Activated B cell treated with CpG ODN at 0.5 μM for 24 hours (primary cell): ENCODE measurements at regions of chr11 and their contacts with region 1.

Region 1: DNA sequence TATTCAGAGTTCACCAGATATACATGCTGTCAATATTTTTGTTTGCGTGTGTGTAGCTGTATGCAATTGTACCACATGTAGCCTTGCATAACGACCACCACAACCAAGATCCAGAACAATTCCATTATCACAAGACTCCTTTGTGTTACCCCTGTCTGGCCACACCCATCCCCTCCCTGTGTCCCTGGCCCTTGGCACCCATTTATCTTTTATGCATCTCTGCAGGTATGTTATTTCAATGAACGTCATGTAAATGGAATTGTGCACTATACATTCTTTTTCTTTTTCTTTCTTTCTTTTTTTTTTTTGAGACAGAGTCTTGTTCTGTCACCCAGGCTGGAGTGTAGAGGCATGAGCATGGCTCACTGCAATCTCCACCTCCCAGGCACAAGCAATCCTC is 9.7 kb upstream of the PAFAH1B2 start:
- DNase-seq: no peak
- ATAC-seq: no peak
- H3K4me3 Mint-ChIP-seq: no peak overlapping the region
- H3K27ac Mint-ChIP-seq: no peak overlapping the region
- H3K4me1 Mint-ChIP-seq: no peaks in the 10 kb centered on the region
- H3K27me3 Mint-ChIP-seq: no peaks in the 10 kb centered on the region
- CTCF ChIP-seq: no peak

Region 2: DNA sequence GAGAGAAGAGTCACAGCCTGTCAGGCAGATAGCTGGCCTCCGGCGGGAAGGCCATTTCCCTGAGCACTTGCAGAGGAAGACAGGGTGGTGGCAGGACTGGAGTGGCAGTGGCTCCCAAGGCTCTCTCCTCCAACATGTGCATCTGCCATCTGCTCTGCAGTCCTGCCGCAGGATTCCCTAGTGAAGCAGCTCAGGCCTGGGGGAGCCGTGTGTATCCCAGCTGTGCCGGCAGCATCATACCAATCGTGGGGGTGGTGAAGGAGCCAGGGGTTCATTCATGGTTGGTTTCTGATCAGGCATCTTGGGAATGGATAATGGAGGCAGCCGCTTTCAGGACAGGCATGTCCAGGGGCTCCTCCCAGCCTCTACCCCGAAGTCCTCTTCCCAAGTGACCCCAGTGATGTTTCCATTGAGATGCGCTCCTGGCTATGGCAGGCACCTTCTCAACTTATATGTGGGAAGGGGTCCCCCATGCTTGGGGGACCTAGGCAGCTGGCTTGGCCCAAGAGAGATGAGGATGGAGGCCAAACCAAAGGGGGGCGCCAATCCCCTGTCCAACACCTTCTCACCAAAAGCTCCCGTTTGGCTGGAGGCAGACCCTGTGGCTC is 70.9 kb after region 1 on chr11:
- CTCF ChIA-PET with region 1: no interaction called
- POLR2A ChIA-PET with region 1: no interaction called
- intact Hi-C with region 1: loop called (anchors 5 kb)
- DNase-seq: no peak
- ATAC-seq: no peak
- H3K4me3 Mint-ChIP-seq: no peak overlapping the region
- H3K27ac Mint-ChIP-seq: peak overlapping the region; percentile 2
- H3K4me1 Mint-ChIP-seq: peaks cover 16% of the 10 kb centered on the region
- H3K27me3 Mint-ChIP-seq: no peaks in the 10 kb centered on the region
- CTCF ChIP-seq: no peak

Region 3: GRCh38 chr11:117497206-117497951 is 362.9 kb after region 1 on chr11:
- CTCF ChIA-PET with region 1: no interaction called
- POLR2A ChIA-PET with region 1: no interaction called
- intact Hi-C with region 1: no loop called
- DNase-seq: no peak
- ATAC-seq: no peak
- H3K4me3 Mint-ChIP-seq: no peak overlapping the region
- H3K27ac Mint-ChIP-seq: no peak overlapping the region
- H3K4me1 Mint-ChIP-seq: no peaks in the 10 kb centered on the region
- H3K27me3 Mint-ChIP-seq: no peaks in the 10 kb centered on the region
- CTCF ChIP-seq: no peak